ENCODE measurements at regions of chr2 and their contacts with region 1.

Region 1: DNA sequence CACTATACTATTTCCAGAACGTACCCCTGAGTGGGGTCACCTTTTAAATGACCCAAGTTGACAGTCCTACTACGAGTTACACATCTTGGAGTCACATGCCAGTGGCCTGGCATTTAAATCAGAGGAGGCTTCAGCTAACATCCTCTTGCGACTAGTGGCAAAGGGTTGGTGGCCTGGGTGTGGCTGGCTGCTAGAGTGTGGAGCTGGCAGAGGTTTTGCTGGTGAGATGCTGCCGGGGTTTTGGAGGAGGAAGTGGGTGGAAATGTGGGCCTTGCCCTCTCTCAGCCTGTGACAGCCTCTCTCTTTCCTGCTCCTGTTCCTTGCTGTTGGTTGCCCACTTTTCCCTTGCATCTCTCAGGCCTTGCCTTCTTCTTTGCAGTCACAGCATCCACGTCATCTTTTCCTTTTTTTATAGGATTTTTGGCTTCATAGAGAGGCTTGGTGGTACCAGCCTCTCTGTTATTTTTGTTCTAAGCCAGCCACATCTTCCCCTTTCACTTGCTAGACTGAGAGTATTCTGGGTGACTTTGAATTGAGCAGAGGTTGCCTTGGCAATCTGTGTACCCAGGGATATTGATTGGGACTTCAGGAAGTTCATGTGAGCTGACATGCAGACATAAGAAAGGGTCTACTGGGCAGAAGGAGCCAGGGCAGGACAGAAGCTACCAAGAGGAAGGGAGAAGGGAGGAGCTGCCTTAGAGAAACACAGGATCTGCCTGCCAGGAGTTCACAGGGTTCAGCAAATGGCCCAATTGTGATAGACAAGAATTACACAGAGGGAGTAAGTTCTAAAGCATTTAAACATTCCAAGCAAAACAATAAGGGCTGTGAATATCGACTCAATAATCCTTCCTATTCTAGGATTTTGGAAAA is 55.4 kb downstream of the CDC42EP3 start:
- DNase-seq: peak; percentile 49 to 80 (median 67)
- H3K4me3 ChIP-seq: no peak overlapping the region
- H3K4me3 Mint-ChIP-seq: peak overlapping the region; percentile 5 to 75 (median 67)
- H3K27ac ChIP-seq: peak overlapping the region; percentile 33
- H3K27ac Mint-ChIP-seq: peak overlapping the region; percentile 87 to 99 (median 95)
- H3K4me1 ChIP-seq: peaks cover 42% of the 10 kb centered on the region
- H3K4me1 Mint-ChIP-seq: peaks cover 81 to 92% (median 89%) of the 10 kb centered on the region in 3 donors
- H3K27me3 ChIP-seq: no peaks in the 10 kb centered on the region
- H3K27me3 Mint-ChIP-seq: no peaks in the 10 kb centered on the region

Region 2: GRCh38 chr2:37402636-37403035 is 213.4 kb before region 1 on chr2:
- CTCF ChIA-PET with region 1: no interaction called
- POLR2A ChIA-PET with region 1: no interaction called
- DNase-seq: no peak
- H3K4me3 ChIP-seq: no peak overlapping the region
- H3K4me3 Mint-ChIP-seq: no peak overlapping the region
- H3K27ac ChIP-seq: no peak overlapping the region
- H3K27ac Mint-ChIP-seq: no peak overlapping the region
- H3K4me1 ChIP-seq: no peaks in the 10 kb centered on the region
- H3K4me1 Mint-ChIP-seq: no peaks in the 10 kb centered on the region
- H3K27me3 ChIP-seq: no peaks in the 10 kb centered on the region
- H3K27me3 Mint-ChIP-seq: peaks cover 0 to 12% of the 10 kb centered on the region in 2 donors

Region 3: DNA sequence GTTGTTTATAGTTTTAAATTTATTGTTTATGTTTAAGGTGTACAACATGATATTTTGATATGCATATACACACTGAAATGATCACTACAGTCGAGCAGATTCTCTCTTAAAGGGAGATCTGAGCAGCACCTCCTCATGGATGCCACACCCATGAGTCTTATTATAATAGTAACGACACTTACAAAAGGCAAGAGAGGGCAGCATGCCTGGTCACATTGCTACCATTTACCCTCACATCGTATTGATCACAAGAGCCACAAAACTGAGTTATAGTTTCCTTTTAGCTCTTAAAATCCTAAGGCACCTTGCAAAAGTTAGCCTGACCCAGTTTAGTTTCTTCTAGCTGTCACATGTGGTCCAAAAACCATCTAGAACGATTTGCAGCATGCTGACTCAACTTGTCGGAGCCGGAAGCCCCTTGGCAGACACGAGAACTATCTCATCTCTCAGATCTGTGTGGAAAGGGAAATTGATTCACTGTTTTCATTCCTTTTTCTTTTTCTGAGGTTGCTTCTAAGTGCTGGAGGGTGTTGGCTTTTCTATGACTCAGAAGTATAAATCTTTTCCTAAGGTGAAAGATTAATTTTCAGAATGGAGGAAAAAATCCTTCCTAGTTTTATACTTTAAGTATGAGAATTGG is 29.9 kb before region 1 on chr2:
- CTCF ChIA-PET with region 1: no interaction called
- POLR2A ChIA-PET with region 1: interaction called, 10 read pairs
- DNase-seq: peak; percentile 60 to 84 (median 71)
- H3K4me3 ChIP-seq: peak overlapping the region; percentile 29
- H3K4me3 Mint-ChIP-seq: peak overlapping the region; percentile 24 to 91 (median 79)
- H3K27ac ChIP-seq: peak overlapping the region; percentile 51
- H3K27ac Mint-ChIP-seq: peak overlapping the region; percentile 91 to 100 (median 95)
- H3K4me1 ChIP-seq: peaks cover 75% of the 10 kb centered on the region
- H3K4me1 Mint-ChIP-seq: peaks cover 90 to 97% (median 97%) of the 10 kb centered on the region in 3 donors
- H3K27me3 ChIP-seq: no peaks in the 10 kb centered on the region
- H3K27me3 Mint-ChIP-seq: no peaks in the 10 kb centered on the region

Measured in CD8-positive, alpha-beta memory T cell (primary cell).